Natural killer cell (primary cell): ENCODE measurements at regions of chr1 and their contacts with region 1.

Region 1: DNA sequence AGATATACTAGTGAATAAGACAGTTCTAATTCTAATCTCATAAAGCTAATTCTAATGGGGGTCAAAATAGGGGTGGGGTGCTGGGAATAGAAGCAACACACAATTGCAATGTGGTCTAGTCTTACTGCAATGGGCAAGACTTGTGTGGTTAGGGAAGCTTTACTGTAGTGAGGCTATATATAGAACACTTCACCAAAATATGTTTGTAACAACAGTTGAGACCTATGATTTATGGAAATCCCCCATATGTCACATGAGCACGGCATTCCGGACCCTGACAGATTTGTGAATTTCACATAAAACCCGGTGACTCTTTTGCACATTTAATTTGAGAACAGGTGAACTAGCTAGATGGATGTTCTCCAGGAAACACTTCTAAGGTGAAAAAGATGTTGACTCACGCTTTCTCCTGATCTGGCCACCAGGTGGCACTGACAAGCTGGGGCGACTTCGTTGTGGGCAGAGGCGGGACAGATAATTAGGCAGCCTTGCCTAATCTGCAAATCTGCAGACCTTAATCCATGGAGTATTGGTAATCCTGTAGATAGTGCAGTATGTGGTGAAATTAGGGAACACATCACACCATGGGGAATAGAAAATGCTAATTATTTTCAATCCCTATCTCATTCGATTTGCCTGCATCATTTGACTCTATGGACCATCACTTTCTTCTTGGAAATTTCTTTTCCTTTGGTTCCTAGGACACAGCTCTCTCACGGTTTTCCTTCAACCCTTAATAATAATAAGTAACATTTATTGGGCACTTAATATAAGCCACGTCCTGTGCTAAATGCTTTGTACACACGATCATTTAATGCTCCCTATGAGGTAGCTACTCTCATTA is 37.7 kb downstream of the KIAA0040 start:
- DNase-seq: peak; percentile 55 to 86
- ATAC-seq: peak; percentile 75 to 79 (median 76)
- H3K4me3 ChIP-seq: no peak overlapping the region
- H3K4me3 Mint-ChIP-seq: no peak overlapping the region
- H3K27ac ChIP-seq: no peak overlapping the region
- H3K27ac Mint-ChIP-seq: no peak overlapping the region
- H3K4me1 ChIP-seq: no peaks in the 10 kb centered on the region
- H3K4me1 Mint-ChIP-seq: peaks cover 0 to 15% of the 10 kb centered on the region in 2 donors
- H3K27me3 ChIP-seq: peaks cover 4% of the 10 kb centered on the region
- H3K27me3 Mint-ChIP-seq: peaks cover 31 to 41% of the 10 kb centered on the region in 2 donors
- CTCF ChIP-seq: peak; percentile 79

Region 2: DNA sequence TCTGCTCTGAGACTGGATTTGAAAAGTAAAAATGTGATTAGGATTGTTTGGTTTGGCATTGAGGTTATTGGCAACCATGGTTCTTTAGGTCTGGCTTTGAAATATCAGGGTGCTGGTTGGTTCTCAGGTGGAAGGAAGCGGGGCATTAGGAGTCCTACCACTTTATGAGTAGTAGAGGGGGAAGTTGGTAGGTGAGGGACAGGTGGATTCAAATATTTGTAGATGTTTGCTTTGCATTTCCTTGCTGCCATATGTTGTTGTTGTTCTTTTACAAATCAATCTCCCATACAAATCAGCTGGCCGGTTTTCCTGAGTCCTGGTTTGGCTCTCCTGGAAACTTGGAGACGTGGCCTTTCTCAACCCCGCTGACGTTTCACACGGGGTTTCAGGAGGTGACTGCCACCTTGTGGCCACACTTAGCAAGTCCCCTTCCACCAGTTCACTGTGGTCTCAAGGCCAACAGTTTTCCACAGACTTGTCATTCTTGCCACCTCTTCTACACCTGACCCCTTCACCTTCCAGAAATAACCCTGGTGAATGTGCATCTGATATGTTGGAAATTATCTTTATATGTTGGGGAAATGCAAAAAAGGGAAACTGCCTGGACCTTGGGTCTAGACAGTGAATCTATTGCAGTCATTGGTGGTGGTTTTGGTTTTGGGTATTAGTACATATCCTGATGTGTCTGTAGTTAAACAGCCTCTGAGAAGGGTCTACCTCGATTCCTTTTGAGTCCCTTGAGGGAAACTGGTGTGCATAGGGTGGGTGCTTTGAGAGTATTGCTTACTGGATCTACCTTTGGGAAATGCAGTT is 164.8 kb after region 1 on chr1:
- intact Hi-C with region 1: loop called (anchors 1 kb)
- DNase-seq: peak; percentile 57 to 88
- ATAC-seq: peak; percentile 84 to 95 (median 93)
- H3K4me3 ChIP-seq: no peak overlapping the region
- H3K4me3 Mint-ChIP-seq: no peak overlapping the region
- H3K27ac ChIP-seq: no peak overlapping the region
- H3K27ac Mint-ChIP-seq: no peak overlapping the region
- H3K4me1 ChIP-seq: no peaks in the 10 kb centered on the region
- H3K4me1 Mint-ChIP-seq: peaks cover 0 to 7% of the 10 kb centered on the region in 2 donors
- H3K27me3 ChIP-seq: no peaks in the 10 kb centered on the region
- H3K27me3 Mint-ChIP-seq: no peaks in the 10 kb centered on the region
- CTCF ChIP-seq: peak; percentile 81

Region 3: GRCh38 chr1:175656416-175656815 is 501.6 kb after region 1 on chr1:
- intact Hi-C with region 1: no loop called
- DNase-seq: no peak
- ATAC-seq: no peak
- H3K4me3 ChIP-seq: no peak overlapping the region
- H3K4me3 Mint-ChIP-seq: no peak overlapping the region
- H3K27ac ChIP-seq: no peak overlapping the region
- H3K27ac Mint-ChIP-seq: no peak overlapping the region
- H3K4me1 ChIP-seq: peaks cover 2% of the 10 kb centered on the region
- H3K4me1 Mint-ChIP-seq: peaks cover 5% of the 10 kb centered on the region in 2 donors
- H3K27me3 ChIP-seq: no peaks in the 10 kb centered on the region
- H3K27me3 Mint-ChIP-seq: no peaks in the 10 kb centered on the region
- CTCF ChIP-seq: no peak

Region 4: GRCh38 chr1:176073524-176074157 is 918.8 kb after region 1 on chr1:
- intact Hi-C with region 1: loop called (anchors 5 kb)
- DNase-seq: peak in 1 of 2 donors; percentile 67
- ATAC-seq: peak; percentile 49 to 67 (median 52)
- H3K4me3 ChIP-seq: no peak overlapping the region
- H3K4me3 Mint-ChIP-seq: no peak overlapping the region
- H3K27ac ChIP-seq: no peak overlapping the region
- H3K27ac Mint-ChIP-seq: no peak overlapping the region
- H3K4me1 ChIP-seq: no peaks in the 10 kb centered on the region
- H3K4me1 Mint-ChIP-seq: peaks cover 24 to 31% of the 10 kb centered on the region in 2 donors
- H3K27me3 ChIP-seq: no peaks in the 10 kb centered on the region
- H3K27me3 Mint-ChIP-seq: no peaks in the 10 kb centered on the region
- CTCF ChIP-seq: peak; percentile 63

Region 5: DNA sequence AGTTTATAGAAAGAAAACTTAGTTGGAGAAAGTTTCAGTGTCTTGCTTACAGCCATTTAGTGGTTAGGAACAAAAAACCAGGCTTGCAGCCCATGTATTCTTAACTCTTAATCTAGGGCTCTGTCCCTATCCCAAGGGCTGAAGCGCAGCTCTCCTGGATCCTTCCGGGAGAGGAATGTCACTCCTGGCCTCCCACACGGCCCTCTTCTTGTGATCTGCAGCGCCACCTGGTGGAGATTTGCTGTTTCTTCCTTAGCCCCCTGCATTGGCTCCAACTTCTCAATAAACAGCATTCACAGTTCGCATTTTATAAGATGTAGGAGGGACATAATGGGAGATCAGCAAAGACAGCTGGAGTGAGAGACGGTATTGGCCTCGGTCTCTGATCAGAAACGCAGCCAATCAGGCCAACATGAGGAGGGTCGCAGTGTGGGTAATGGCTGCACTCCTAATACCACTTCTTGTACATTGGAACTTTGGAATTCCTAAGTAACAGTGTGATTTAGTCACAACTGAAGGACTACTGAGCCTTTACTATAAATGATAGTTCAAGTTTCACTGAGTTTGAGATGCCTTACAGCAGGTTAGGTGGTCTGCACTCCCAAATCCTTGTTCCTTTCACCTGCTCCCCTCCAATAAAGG is 1726.2 kb after region 1 on chr1:
- intact Hi-C with region 1: loop called (anchors 5 kb)
- DNase-seq: peak; percentile 25 to 44
- ATAC-seq: no peak
- H3K4me3 ChIP-seq: no peak overlapping the region
- H3K4me3 Mint-ChIP-seq: no peak overlapping the region
- H3K27ac ChIP-seq: no peak overlapping the region
- H3K27ac Mint-ChIP-seq: no peak overlapping the region
- H3K4me1 ChIP-seq: no peaks in the 10 kb centered on the region
- H3K4me1 Mint-ChIP-seq: no peaks in the 10 kb centered on the region
- H3K27me3 ChIP-seq: no peaks in the 10 kb centered on the region
- H3K27me3 Mint-ChIP-seq: peaks cover 0 to 3% of the 10 kb centered on the region in 2 donors
- CTCF ChIP-seq: peak; percentile 53